CD4-positive, alpha-beta T cell (primary cell): ENCODE measurements at regions of chr5 and their contacts with region 1.

Region 1: DNA sequence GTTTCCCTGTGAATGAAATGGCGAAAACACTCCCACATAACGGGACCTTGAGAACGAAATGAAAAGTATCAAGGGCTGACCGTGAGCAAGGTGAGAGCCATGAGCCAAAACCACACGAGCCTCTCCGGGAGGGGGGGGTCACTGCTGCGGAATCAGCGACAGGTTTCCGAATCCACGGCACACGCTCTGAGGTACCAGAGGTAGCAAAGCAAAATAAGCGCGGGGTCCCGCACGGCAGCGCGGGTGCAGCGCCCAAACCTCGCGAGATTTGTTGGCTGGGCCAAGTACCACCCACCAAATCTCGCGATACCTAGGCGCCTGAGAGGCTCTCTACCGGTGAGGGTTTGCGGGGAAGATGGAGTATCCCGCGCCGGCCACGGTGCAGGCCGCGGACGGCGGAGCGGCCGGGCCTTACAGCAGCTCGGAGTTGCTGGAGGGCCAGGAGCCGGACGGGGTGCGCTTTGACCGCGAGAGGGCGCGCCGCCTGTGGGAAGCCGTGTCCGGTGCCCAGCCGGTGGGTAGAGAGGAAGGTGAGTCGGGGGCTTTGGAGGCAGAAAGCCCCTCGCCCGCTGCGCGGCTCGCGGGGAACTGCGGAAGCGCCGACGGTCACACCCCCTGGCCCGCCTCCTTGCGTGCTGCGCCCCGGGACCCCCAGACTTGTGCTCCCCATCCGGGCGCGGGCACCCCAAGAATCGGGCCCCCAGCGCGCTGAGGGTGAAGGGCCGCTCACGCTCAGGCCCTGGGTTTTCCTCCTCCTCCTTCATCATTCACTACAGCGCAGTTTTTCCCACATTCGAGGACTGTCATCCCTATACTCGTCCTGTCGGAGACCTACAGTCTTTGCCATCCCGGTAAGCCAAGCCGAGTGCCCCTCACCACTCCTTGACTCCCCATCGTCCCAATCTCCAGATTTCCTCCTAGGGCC is at the start of gene ZNF346:
- DNase-seq: peak; percentile 84 to 97 (median 90)
- ATAC-seq: peak; percentile 99
- H3K4me3 ChIP-seq: peak within 1 kb of the TSS; percentile 83
- H3K4me3 Mint-ChIP-seq: peak within 1 kb of the TSS; percentile 98
- H3K27ac ChIP-seq: peak within 1 kb of the TSS; percentile 43 to 77
- H3K27ac Mint-ChIP-seq: peak within 1 kb of the TSS; percentile 92
- H3K4me1 ChIP-seq: peaks cover 23% of the 10 kb centered on the region
- H3K4me1 Mint-ChIP-seq: peaks cover 44% of the 10 kb centered on the region
- H3K27me3 ChIP-seq: no peaks in the 10 kb centered on the region
- H3K27me3 Mint-ChIP-seq: no peaks in the 10 kb centered on the region
- CTCF ChIP-seq: peak; percentile 44
- total RNA-seq, gene ZNF346: 14.3 to 19.0 TPM

Region 2: DNA sequence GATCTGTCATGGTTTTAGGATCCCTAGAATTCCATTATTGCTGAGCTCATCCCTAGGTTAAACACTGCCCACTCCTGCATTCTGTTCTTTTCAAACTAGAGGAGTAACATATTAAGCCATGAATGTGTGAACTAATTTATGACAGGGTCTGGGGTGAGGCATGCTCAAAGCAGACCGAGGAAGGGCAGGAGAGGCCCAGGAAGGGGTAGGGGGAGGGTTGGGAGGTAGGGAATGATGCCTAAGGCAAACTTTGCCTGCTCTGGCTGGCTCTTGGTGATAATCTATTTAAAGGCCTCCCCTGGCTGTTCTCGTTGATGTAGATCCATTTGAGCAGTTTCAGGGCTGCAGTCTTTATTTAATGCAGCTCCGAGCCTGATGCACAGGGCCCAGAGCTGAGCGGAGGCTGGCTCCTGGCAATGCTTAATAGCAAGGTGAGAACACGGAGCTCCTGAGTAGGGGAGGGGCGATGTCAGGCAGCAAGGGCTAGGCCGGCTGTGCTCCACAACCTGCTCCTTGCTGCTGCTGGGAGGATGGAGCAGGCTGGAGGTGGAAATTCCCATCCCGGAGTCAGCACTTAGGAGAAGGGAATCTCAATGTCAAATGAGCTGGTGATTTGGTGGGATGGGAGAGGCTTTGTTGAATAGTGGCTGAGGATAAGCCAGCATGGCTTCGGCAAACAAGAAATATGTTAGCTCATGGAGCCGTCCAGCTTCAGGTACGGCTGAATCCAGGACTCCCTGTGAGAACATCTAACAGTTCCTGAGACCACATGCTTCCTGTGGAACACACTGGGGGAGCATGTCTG is 285.5 kb before region 1 on chr5:
- CTCF ChIA-PET with region 1: no interaction called
- POLR2A ChIA-PET with region 1: no interaction called
- intact Hi-C with region 1: no loop called
- DNase-seq: peak in 1 of 14 experiments; percentile 20
- ATAC-seq: no peak
- H3K4me3 ChIP-seq: no peak overlapping the region
- H3K4me3 Mint-ChIP-seq: no peak overlapping the region
- H3K27ac ChIP-seq: no peak overlapping the region
- H3K27ac Mint-ChIP-seq: no peak overlapping the region
- H3K4me1 ChIP-seq: peaks cover 4% of the 10 kb centered on the region
- H3K4me1 Mint-ChIP-seq: no peaks in the 10 kb centered on the region
- H3K27me3 ChIP-seq: peaks cover 28 to 37% of the 10 kb centered on the region in 2 experiments
- H3K27me3 Mint-ChIP-seq: peaks cover 64% of the 10 kb centered on the region
- CTCF ChIP-seq: no peak

Region 3: DNA sequence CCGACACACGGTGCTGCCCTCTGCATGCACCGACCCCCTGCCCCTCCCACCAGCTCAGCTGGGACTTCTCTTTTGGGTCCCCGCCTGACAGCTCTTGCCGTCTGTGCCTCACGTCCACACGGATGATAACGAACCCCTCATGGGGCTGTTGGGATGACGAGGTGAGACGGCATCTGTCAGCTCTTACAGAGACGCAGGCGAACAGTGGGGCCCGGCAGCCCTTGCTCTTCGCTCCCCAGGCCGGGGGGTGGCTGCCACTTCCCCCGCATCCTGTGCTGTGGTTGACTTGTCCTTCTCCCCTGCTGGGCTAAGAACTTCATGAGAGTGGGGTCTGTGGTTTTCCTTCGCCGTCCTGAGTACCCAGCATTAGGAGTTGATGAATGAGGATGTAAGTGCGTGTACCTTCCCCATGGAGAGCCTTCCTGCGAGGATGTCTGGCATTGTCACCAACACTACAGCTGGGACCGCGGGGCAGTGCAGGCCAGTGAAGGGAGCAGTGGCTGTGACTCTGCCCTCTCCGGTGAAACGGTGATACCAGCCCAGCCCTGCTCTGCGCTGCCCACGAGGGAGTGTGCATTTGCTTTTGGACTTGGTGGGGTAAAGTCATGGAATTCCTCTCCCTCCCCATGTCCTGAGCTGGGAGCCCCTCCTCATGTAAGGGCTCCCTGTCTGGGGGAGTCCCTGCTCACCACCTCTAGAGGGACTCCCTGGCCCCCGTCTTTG is 146.7 kb before region 1 on chr5:
- CTCF ChIA-PET with region 1: no interaction called
- POLR2A ChIA-PET with region 1: no interaction called
- intact Hi-C with region 1: no loop called
- DNase-seq: no peak
- ATAC-seq: no peak
- H3K4me3 ChIP-seq: no peak overlapping the region
- H3K4me3 Mint-ChIP-seq: no peak overlapping the region
- H3K27ac ChIP-seq: no peak overlapping the region
- H3K27ac Mint-ChIP-seq: no peak overlapping the region
- H3K4me1 ChIP-seq: peaks cover 7% of the 10 kb centered on the region
- H3K4me1 Mint-ChIP-seq: peaks cover 5% of the 10 kb centered on the region
- H3K27me3 ChIP-seq: peaks cover 9 to 27% of the 10 kb centered on the region in 2 experiments
- H3K27me3 Mint-ChIP-seq: peaks cover 22% of the 10 kb centered on the region
- CTCF ChIP-seq: no peak

Region 4: GRCh38 chr5:176985516-176985915 is 37.1 kb before region 1 on chr5:
- CTCF ChIA-PET with region 1: no interaction called
- POLR2A ChIA-PET with region 1: interaction called, 12 read pairs
- intact Hi-C with region 1: no loop called
- DNase-seq: peak; percentile 7 to 74 (median 37)
- ATAC-seq: peak; percentile 99
- H3K4me3 ChIP-seq: no peak overlapping the region
- H3K4me3 Mint-ChIP-seq: peak overlapping the region; percentile 54
- H3K27ac ChIP-seq: peak overlapping the region in 1 of 2 donors; percentile 40
- H3K27ac Mint-ChIP-seq: peak overlapping the region; percentile 89
- H3K4me1 ChIP-seq: peaks cover 19% of the 10 kb centered on the region
- H3K4me1 Mint-ChIP-seq: peaks cover 34% of the 10 kb centered on the region
- H3K27me3 ChIP-seq: no peaks in the 10 kb centered on the region
- H3K27me3 Mint-ChIP-seq: no peaks in the 10 kb centered on the region
- CTCF ChIP-seq: no peak

Region 5: GRCh38 chr5:177006265-177006972 is 16.2 kb before region 1 on chr5 and contains the start of gene UIMC1:
- CTCF ChIA-PET with region 1: interaction called, 10 read pairs
- POLR2A ChIA-PET with region 1: interaction called, 24 read pairs
- intact Hi-C with region 1: loop called (anchors 1 to 2 kb)
- DNase-seq: peak; percentile 84 to 96 (median 89)
- ATAC-seq: peak; percentile 83
- H3K4me3 ChIP-seq: peak within 1 kb of the TSS; percentile 91
- H3K4me3 Mint-ChIP-seq: peak within 1 kb of the TSS; percentile 99
- H3K27ac ChIP-seq: peak within 1 kb of the TSS; percentile 70 to 72
- H3K27ac Mint-ChIP-seq: peak within 1 kb of the TSS; percentile 95
- H3K4me1 ChIP-seq: peaks cover 32% of the 10 kb centered on the region
- H3K4me1 Mint-ChIP-seq: peaks cover 35% of the 10 kb centered on the region
- H3K27me3 ChIP-seq: no peaks in the 10 kb centered on the region
- H3K27me3 Mint-ChIP-seq: no peaks in the 10 kb centered on the region
- CTCF ChIP-seq: no peak
- total RNA-seq, gene UIMC1: 42.3 to 50.8 TPM

Region 6: DNA sequence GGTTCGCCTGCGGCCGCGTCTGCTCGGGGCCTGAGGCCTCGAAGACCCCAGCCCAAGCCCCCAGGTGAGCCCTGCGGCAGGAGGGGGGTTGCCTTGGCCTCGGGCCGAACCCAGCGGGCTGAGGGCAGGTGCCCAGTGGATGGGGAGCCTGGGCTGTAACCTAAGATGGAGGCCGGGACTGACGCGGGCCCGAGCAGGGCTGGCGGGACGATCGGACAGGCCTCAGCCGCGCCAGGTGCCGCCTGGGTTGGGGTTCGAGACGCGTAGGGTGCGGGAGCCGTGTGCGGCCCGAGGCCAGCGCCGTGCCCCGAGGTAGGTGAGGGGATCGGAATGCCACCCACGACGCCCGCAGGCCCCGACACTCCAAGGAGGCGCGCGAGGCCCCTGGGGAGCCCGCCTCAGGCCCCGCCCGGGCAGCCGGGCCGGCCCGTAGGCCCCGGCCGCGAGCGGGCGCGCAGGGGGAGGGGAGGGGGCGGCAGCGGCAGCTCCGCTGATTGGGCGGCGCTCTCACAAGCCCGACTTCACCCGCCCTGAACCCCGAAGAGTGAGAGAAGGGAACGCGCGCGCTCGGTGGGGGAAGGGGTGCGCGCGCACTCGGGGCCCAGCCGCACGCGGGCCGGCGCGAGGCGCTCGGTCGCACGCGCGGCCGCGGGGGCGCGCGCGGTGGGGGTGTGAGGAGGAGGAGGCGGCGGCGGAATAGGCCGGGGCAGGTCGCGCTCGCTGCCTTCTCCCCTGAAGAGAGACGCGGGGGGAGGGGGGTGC is 110.6 kb after region 1 on chr5 and contains the start of gene NSD1:
- CTCF ChIA-PET with region 1: no interaction called
- POLR2A ChIA-PET with region 1: interaction called, 3 read pairs
- intact Hi-C with region 1: loop called in 1 of 2 experiments (anchors 5 kb)
- DNase-seq: peak; percentile 83 to 97 (median 90)
- ATAC-seq: peak; percentile 71
- H3K4me3 ChIP-seq: peak within 1 kb of the TSS; percentile 65
- H3K4me3 Mint-ChIP-seq: peak within 1 kb of the TSS; percentile 90
- H3K27ac ChIP-seq: peak within 1 kb of the TSS; percentile 71 to 76
- H3K27ac Mint-ChIP-seq: peak within 1 kb of the TSS; percentile 97
- H3K4me1 ChIP-seq: peaks cover 54% of the 10 kb centered on the region
- H3K4me1 Mint-ChIP-seq: peaks cover 67% of the 10 kb centered on the region
- H3K27me3 ChIP-seq: no peaks in the 10 kb centered on the region
- H3K27me3 Mint-ChIP-seq: no peaks in the 10 kb centered on the region
- CTCF ChIP-seq: no peak
- total RNA-seq, gene NSD1: 87.6 to 93.3 TPM